ENCODE measurements at regions of chr11 and their contacts with region 1.

Region 1: GRCh38 chr11:87778357-87778756 is 396.9 kb downstream of the RAB38 start:
- DNase-seq: no peak
- ATAC-seq: no peak
- H3K4me3 ChIP-seq: no peak overlapping the region
- H3K27ac ChIP-seq: no peak overlapping the region
- H3K4me1 ChIP-seq: peaks cover 0 to 5% (median 0%) of the 10 kb centered on the region in 9 donors
- H3K27me3 ChIP-seq: no peaks in the 10 kb centered on the region
- CTCF ChIP-seq: no peak

Region 2: GRCh38 chr11:87719326-87720073 is 58.9 kb before region 1 on chr11:
- intact Hi-C with region 1: loop called in 1 of 10 experiments (anchors 10 kb)
- DNase-seq: no peak
- ATAC-seq: no peak
- H3K4me3 ChIP-seq: no peak overlapping the region
- H3K27ac ChIP-seq: no peak overlapping the region
- H3K4me1 ChIP-seq: no peaks in the 10 kb centered on the region
- H3K27me3 ChIP-seq: peaks cover 0 to 8% (median 0%) of the 10 kb centered on the region in 7 donors
- CTCF ChIP-seq: no peak

Region 3: GRCh38 chr11:87812571-87813365 is 34.4 kb after region 1 on chr11:
- intact Hi-C with region 1: no loop called
- DNase-seq: no peak
- ATAC-seq: no peak
- H3K4me3 ChIP-seq: no peak overlapping the region
- H3K27ac ChIP-seq: no peak overlapping the region
- H3K4me1 ChIP-seq: no peaks in the 10 kb centered on the region
- H3K27me3 ChIP-seq: no peaks in the 10 kb centered on the region
- CTCF ChIP-seq: no peak

Region 4: GRCh38 chr11:88087337-88087736 is 309.0 kb after region 1 on chr11:
- intact Hi-C with region 1: no loop called
- DNase-seq: no peak
- ATAC-seq: no peak
- H3K4me3 ChIP-seq: no peak overlapping the region
- H3K27ac ChIP-seq: no peak overlapping the region
- H3K4me1 ChIP-seq: no peaks in the 10 kb centered on the region
- H3K27me3 ChIP-seq: no peaks in the 10 kb centered on the region
- CTCF ChIP-seq: no peak

Measured in heart right ventricle (tissue), 16 donors.